Activated CD4-positive, alpha-beta T cell treated with anti-CD3 and anti-CD28 coated beads, Interleukin-2, amount 10 ng/mL, durations not matched to agents 24 days and 14 days (primary cell): ENCODE measurements at regions of chr22 and their contacts with region 1.

Region 1: DNA sequence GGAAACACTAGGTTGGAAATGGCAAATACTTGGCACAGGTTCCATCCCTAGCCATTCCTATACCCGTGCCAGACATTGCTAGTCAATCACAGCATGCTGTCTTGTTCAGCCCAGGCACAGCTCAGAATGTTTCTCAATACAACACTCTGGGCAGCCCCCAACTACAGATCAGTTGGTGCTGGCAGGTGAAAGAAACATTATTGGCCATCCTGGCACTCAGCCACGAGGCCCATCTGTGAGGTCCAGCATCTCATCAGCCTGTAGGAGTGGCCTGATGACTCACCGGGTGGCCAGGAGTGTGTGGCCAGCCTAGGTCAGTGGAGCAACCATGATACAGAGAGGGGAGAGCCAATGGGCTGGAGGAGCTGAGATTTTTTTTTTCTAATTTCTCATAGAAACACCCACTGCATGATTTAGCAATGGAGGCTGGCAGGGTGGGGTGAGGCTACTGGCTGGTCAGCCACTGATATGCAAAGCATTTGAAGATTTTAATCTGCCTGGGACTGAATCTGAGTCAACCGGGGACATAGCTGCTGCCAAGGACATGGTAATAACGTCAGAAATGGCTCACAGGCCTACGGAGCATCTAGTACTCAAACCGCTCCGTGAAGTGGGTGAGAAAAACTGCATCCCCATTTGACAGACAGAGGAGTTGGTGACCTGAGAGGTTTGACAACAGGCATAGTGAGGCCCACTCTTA is 5.4 kb downstream of the MYO18B start:
- DNase-seq: no peak
- H3K4me3 Mint-ChIP-seq: no peak overlapping the region
- H3K27ac Mint-ChIP-seq: peak overlapping the region; percentile 100
- H3K4me1 Mint-ChIP-seq: peaks cover 74% of the 10 kb centered on the region
- H3K27me3 Mint-ChIP-seq: no peaks in the 10 kb centered on the region

Region 2: GRCh38 chr22:25067851-25068421 is 679.5 kb before region 1 on chr22:
- intact Hi-C with region 1: loop called (anchors 10 kb)
- DNase-seq: peak; percentile 96
- H3K4me3 Mint-ChIP-seq: peak overlapping the region; percentile 95
- H3K27ac Mint-ChIP-seq: peak overlapping the region; percentile 97
- H3K4me1 Mint-ChIP-seq: peaks cover 73% of the 10 kb centered on the region
- H3K27me3 Mint-ChIP-seq: no peaks in the 10 kb centered on the region

Region 3: GRCh38 chr22:25564979-25565677 is 182.3 kb before region 1 on chr22:
- intact Hi-C with region 1: loop called (anchors 5 kb)
- DNase-seq: peak; percentile 79
- H3K4me3 Mint-ChIP-seq: peak overlapping the region; percentile 96
- H3K27ac Mint-ChIP-seq: peak overlapping the region; percentile 95
- H3K4me1 Mint-ChIP-seq: peaks cover 64% of the 10 kb centered on the region
- H3K27me3 Mint-ChIP-seq: no peaks in the 10 kb centered on the region

Region 4: DNA sequence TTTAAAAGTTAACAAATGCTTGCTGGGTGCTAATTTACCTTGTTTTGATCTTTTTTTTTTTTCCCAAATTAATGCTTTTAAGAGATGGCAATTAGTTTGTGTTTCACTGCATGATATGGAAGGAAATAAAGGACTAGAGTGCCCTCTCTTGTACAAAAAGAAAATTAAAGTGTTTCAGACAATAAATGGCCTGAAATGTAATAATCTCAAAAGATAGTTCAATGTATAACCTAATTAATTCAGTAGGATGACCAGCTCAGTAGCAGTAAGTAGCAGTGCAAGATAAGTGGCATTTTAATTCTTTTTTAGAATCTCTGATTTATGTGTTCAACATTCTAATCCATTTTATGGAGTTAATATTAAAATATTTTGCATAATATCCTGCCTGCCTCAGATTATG is 45.4 kb before region 1 on chr22:
- intact Hi-C with region 1: loop called (anchors 2 kb)
- DNase-seq: no peak
- H3K4me3 Mint-ChIP-seq: peak overlapping the region; percentile 69
- H3K27ac Mint-ChIP-seq: peak overlapping the region; percentile 61
- H3K4me1 Mint-ChIP-seq: peaks cover 47% of the 10 kb centered on the region
- H3K27me3 Mint-ChIP-seq: no peaks in the 10 kb centered on the region

Region 5: DNA sequence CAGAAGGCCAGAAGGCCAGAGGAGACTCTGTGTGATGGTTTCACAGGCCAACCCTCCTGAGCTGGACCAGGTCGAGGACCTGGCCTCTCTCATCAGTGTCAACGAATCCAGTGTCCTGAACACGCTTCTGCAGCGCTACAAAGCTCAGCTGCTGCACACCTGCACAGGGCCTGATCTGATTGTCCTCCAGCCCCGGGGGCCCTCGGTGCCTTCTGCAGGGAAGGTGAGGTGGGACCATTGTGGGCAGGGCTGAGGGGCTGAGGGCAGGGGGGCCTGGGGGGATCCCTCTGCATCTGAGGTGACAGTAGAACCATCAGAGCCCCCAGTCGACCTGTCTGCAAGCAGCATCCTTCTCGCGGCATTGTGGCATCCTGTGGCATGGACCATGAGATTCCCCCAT is 24.9 kb after region 1 on chr22:
- intact Hi-C with region 1: loop called (anchors 2 kb)
- DNase-seq: no peak
- H3K4me3 Mint-ChIP-seq: no peak overlapping the region
- H3K27ac Mint-ChIP-seq: peak overlapping the region; percentile 84
- H3K4me1 Mint-ChIP-seq: peaks cover 32% of the 10 kb centered on the region
- H3K27me3 Mint-ChIP-seq: no peaks in the 10 kb centered on the region